Activated T-helper 1 cell treated with anti-CD3 and anti-CD28 coated beads, Interleukin-12 subunit alpha, Interleukin-12 subunit beta, Interleukin-2, Interleukin-4 antibody, amounts not matched to agents 30 ng/mL and 10 ng/mL and 1 ng/mL, durations not matched to agents 14 hours and 24 hours and 36 hours (primary cell): ENCODE measurements at regions of chr11 and their contacts with region 1.

Region 1: GRCh38 chr11:6603287-6604080 is at the starts of genes ILK and RRP8:
- DNase-seq: peak; percentile 84
- H3K4me3 Mint-ChIP-seq: no peak within 1 kb of the TSS
- H3K27ac Mint-ChIP-seq: no peak within 1 kb of the TSS
- H3K4me1 Mint-ChIP-seq: peaks cover 26% of the 10 kb centered on the region
- H3K27me3 Mint-ChIP-seq: no peaks in the 10 kb centered on the region
- total RNA-seq, gene ILK: 90.1 and 97.5 TPM in 2 replicates
- total RNA-seq, gene RRP8: 38.8 and 40.5 TPM in 2 replicates

Region 2: GRCh38 chr11:6377902-6378639 is 225.4 kb before region 1 on chr11:
- intact Hi-C with region 1: loop called (anchors 2 kb)
- DNase-seq: no peak
- H3K4me3 Mint-ChIP-seq: peak overlapping the region; percentile 19
- H3K27ac Mint-ChIP-seq: peak overlapping the region; percentile 44
- H3K4me1 Mint-ChIP-seq: peaks cover 33% of the 10 kb centered on the region
- H3K27me3 Mint-ChIP-seq: peaks cover 4% of the 10 kb centered on the region

Region 3: GRCh38 chr11:6531267-6531752 is 72.2 kb before region 1 on chr11:
- intact Hi-C with region 1: loop called (anchors 1 kb)
- DNase-seq: peak; percentile 16
- H3K4me3 Mint-ChIP-seq: no peak overlapping the region
- H3K27ac Mint-ChIP-seq: no peak overlapping the region
- H3K4me1 Mint-ChIP-seq: peaks cover 12% of the 10 kb centered on the region
- H3K27me3 Mint-ChIP-seq: no peaks in the 10 kb centered on the region

Region 4: GRCh38 chr11:6627762-6628241 is 24.3 kb after region 1 on chr11:
- intact Hi-C with region 1: loop called (anchors 2 kb)
- DNase-seq: no peak
- H3K4me3 Mint-ChIP-seq: peak overlapping the region; percentile 53
- H3K27ac Mint-ChIP-seq: peak overlapping the region; percentile 75
- H3K4me1 Mint-ChIP-seq: peaks cover 13% of the 10 kb centered on the region
- H3K27me3 Mint-ChIP-seq: no peaks in the 10 kb centered on the region

Region 5: DNA sequence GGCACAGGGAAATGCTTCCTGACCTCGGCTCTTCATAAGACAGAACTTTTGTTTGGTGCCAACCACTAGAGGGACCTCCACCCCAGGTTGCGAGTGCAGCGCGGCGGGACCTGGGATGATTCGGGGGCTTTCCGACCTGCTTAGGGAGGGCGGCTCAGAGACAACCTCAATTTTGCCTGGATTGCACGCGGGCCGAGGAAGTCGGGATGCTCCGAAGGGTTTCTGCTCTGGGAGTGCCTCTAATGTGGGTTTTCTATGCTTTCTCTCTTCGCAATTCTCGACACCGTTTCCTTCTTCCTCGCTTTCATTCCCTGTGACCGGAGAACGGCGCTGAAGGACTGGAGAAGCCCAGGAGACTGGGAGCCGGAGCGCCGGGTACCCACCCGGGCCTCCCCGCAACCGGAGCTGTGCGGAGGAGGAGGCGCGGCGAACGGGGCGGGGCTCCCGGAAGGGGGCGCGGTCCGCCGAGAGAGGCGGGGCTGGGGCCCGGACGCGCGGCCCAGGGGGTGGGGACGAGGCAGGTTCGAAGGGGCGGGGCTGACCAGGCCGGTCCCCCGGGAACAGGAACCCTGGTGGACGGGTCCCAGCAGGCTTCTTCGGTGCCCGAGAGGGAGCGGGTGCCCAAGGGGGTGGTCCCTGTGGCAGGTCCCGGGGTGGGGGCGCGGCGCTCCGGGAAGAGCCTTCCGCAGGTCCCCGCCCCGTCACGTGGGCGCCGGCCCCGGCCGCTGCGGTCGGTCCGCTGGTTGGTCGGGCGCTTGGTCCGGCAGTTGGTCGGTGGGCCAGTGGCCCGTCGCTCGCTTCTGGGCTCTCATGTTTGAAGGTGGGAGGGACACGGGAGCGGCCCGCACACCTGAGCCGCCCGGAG is 910.0 kb after region 1 on chr11 and contains the start of gene PPFIBP2:
- intact Hi-C with region 1: loop called (anchors 2 kb)
- DNase-seq: peak; percentile 80
- H3K4me3 Mint-ChIP-seq: peak within 1 kb of the TSS; percentile 91
- H3K27ac Mint-ChIP-seq: peak within 1 kb of the TSS; percentile 84
- H3K4me1 Mint-ChIP-seq: peaks cover 10% of the 10 kb centered on the region
- H3K27me3 Mint-ChIP-seq: peaks cover 33% of the 10 kb centered on the region
- total RNA-seq, gene PPFIBP2: 0.62 and 2.9 TPM in 2 replicates